MCF 10A (cell line): ENCODE measurements at regions of chr14 and their contacts with region 1.

Region 1: DNA sequence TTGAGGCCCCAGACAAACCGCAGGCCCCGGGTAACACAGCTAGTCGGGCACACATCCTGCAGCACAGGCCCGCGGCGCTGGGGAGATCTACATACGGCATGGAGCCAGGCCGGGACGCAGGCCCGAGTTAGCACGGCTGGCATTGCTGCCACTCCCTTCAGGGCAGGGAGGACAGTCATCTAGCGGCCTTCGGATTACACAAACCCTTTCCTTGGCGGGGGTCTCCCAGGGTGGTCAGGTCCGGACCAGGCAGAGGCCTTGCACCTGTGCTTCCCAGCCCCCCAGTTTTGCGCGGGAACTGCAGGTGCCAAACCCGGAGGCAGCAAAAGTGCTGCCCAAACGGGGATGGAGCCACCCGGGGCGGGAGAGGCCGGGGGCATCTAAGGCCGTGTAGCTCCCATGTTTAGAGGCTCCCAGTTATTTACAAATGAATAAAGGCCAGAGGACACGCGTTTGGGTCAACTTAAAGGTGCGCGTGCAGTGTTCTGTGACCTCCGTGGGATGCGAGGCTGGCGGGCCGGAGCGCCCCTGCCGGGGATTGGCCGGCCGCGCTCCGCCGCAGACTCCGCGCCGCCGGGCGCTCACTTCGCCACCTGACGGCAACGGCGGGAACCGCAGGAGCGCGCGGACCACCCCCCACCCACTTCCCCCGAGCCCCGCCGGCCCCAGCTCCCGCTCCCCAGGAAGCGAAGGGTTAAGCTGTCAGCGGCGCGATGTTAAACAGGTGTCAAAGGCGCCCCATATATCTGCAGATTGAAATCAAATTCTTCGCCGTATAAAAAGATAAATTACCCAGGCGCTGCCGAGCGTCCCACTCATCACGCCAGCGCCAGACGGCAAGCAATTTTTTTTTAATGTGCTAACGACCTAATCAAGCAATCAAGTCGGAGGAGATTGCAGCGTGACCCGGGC is 18.1 kb downstream of the VSX2 start:
- DNase-seq: peak; percentile 31
- H3K4me3 Mint-ChIP-seq: peak overlapping the region; percentile 61
- H3K27ac Mint-ChIP-seq: no peak overlapping the region
- H3K4me1 Mint-ChIP-seq: peaks cover 10% of the 10 kb centered on the region
- H3K27me3 Mint-ChIP-seq: no peaks in the 10 kb centered on the region
- CTCF ChIP-seq: peak; percentile 96

Region 2: DNA sequence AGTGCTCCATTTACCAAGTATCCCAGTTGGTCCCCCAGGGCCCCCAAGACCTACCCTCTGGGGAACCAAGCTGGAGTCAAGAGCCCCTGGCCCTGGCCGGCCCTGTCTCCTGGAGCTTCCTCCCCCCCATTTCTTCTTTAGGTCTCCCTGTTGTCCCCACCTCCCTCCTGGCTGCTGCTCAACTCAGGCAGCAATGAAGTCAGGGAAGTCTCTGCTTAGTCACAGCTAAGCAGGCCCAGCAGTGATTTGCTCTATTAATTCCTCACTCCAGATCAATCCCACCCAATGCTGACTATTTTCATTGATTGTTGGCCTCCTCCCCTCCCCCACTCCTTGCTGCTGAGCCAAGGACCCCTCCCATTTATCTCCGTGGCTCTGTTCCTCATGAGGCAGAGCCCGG is 10.3 kb after region 1 on chr14:
- CTCF ChIA-PET with region 1: interaction called, 10 read pairs
- POLR2A ChIA-PET with region 1: interaction called, 3 read pairs
- intact Hi-C with region 1: no loop called
- DNase-seq: no peak
- H3K4me3 Mint-ChIP-seq: no peak overlapping the region
- H3K27ac Mint-ChIP-seq: no peak overlapping the region
- H3K4me1 Mint-ChIP-seq: peaks cover 6% of the 10 kb centered on the region
- H3K27me3 Mint-ChIP-seq: peaks cover 13% of the 10 kb centered on the region
- CTCF ChIP-seq: no peak

Region 3: DNA sequence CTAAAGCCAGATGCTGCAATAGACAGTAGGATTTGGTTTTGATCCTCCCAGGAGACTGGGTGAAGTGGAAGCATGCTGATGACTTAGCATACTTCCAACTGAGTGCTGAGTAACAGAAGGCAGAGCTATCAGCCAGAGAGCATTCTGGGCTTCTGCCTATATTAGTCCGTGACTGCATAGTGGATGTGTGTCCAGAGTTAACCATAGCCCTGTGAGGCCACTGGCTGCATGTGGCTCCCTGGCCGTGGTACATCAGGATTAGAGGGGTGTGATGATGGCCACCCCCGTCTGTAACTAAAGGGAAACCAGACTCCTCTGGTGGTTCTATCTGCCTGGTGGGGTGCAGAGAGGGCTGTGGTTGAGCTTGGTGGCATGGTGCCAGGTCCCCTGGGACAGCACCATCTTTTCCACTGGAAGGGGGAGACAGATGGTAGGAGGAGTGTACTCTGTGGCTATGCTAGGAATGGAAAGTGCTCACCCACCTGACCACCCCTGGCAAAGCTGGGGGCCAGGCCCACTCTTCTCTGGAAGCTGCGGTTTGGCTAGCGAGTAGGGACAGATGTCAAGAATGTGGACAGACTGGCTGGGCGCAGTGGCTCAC is 18.0 kb after region 1 on chr14:
- CTCF ChIA-PET with region 1: interaction called, 11 read pairs
- POLR2A ChIA-PET with region 1: interaction called, 3 read pairs
- intact Hi-C with region 1: no loop called
- DNase-seq: no peak
- H3K4me3 Mint-ChIP-seq: no peak overlapping the region
- H3K27ac Mint-ChIP-seq: no peak overlapping the region
- H3K4me1 Mint-ChIP-seq: peaks cover 6% of the 10 kb centered on the region
- H3K27me3 Mint-ChIP-seq: peaks cover 14% of the 10 kb centered on the region
- CTCF ChIP-seq: no peak

Region 4: DNA sequence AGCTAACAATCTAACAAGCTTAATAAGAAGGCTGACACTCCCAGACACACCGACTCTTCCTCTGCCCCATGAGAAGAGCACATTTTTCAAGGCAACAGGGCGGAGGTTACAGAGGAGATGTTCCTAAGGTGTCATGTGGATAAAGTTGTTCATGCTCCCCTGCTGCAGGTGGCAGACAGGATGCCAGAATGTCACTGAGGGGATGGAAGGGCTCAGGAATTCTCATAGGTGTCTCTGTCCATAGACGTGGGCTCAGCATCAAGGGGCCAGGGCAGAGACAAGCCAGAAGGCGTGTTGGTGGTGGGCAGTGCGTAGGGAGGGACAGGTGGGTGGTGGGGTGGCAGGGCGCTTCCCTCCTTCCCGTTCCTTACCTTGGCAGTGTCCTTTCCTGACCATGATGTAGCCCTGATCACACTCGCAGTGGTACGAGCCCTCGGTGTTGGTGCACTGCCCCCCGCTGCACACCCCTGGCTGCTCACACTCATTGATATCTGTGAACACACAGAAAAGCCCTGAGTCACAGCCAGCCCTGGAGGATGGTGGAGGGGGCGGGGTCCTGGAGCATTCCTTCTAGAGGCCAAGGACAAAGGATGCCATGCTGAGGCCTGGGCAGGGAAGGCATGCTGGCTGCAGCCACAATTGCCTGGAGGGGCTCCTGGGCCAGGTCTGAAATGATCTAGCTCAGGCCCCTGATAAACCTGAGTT is 259.3 kb after region 1 on chr14:
- CTCF ChIA-PET with region 1: no interaction called
- POLR2A ChIA-PET with region 1: no interaction called
- intact Hi-C with region 1: no loop called
- DNase-seq: no peak
- H3K4me3 Mint-ChIP-seq: no peak overlapping the region
- H3K27ac Mint-ChIP-seq: no peak overlapping the region
- H3K4me1 Mint-ChIP-seq: peaks cover under 1% of the 10 kb centered on the region
- H3K27me3 Mint-ChIP-seq: no peaks in the 10 kb centered on the region
- CTCF ChIP-seq: no peak